ENCODE measurements at regions of chr6 and their contacts with region 1.

Region 1: GRCh38 chr6:40308533-40309306 is 278.4 kb downstream of the LRFN2 start:
- DNase-seq: peak in 1 of 2 donors; percentile 43
- ATAC-seq: no peak
- H3K4me3 ChIP-seq: no peak overlapping the region
- H3K27ac ChIP-seq: no peak overlapping the region
- H3K4me1 ChIP-seq: no peaks in the 10 kb centered on the region
- H3K27me3 ChIP-seq: no peaks in the 10 kb centered on the region

Region 2: GRCh38 chr6:39347906-39348585 is 960.7 kb before region 1 on chr6:
- intact Hi-C with region 1: loop called in 1 of 2 experiments (anchors 10 kb)
- DNase-seq: peak; percentile 79 to 92
- ATAC-seq: peak; percentile 75
- H3K4me3 ChIP-seq: no peak overlapping the region
- H3K27ac ChIP-seq: no peak overlapping the region
- H3K4me1 ChIP-seq: no peaks in the 10 kb centered on the region
- H3K27me3 ChIP-seq: no peaks in the 10 kb centered on the region

Region 3: DNA sequence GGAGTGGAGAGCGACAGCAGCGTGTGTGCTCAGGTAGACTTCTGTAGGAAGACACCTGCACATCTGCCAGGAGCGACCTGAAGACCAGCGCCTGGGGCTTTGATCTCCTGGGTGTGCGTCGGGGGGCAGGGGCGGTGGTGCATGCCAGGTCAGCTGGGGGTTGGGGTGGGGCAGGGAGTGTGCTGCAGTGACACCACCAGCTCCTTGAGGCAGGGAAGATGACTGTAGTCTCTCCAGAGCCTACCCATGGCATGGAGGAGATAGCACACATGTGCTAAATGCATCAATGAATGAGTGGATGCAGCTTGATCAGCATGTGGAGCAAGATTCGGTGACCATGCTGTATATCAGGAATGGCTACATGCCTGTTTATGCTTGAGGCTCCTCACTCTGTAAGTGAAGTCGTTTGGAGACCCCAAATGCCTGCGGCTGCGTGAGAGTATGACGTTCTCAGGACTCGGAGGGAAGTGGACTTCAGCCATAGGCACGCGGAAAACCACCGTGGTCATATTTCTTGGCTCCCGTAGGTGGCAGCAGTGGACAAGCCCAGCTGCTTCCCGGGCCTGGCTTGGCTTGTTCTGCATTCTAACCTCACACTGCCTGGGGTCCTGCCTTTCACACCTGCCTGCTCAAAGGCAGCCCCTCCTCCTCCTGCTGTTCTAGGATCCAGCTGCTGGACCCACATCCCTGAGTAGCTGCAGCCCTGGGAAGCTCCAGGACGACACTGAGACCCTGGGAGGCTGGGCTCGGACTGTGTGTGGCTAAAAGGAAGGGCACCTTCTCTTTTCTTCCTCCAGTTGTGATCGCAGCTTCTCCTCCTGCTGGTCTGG is 946.8 kb before region 1 on chr6:
- intact Hi-C with region 1: loop called in 1 of 2 experiments (anchors 10 kb)
- DNase-seq: peak in 1 of 2 donors; percentile 74
- ATAC-seq: peak; percentile 84
- H3K4me3 ChIP-seq: no peak overlapping the region
- H3K27ac ChIP-seq: no peak overlapping the region
- H3K4me1 ChIP-seq: no peaks in the 10 kb centered on the region
- H3K27me3 ChIP-seq: no peaks in the 10 kb centered on the region

Region 4: GRCh38 chr6:39980839-39981580 is 327.7 kb before region 1 on chr6:
- intact Hi-C with region 1: loop called (anchors 2 to 5 kb)
- DNase-seq: no peak
- ATAC-seq: peak; percentile 89
- H3K4me3 ChIP-seq: no peak overlapping the region
- H3K27ac ChIP-seq: no peak overlapping the region
- H3K4me1 ChIP-seq: no peaks in the 10 kb centered on the region
- H3K27me3 ChIP-seq: no peaks in the 10 kb centered on the region

Region 5: DNA sequence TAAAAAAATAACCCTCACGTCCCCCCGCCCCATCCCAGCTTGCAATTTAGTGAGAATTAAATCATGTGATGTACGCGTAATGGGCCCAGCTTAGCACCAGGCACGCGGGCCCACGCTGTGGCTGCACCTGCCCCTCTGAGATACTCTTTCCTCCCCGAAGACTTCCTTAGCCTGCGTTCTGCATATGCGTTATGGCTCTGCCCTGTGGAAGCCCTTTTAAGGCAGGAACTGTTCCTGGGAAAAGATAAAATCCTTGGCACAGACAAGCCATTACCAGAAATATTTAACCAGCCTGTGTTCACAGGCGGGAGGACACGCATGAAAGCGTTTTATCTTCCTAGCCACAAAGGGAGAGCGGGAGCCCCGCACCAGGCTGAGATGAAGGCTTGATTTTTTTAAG is 32.6 kb before region 1 on chr6:
- intact Hi-C with region 1: no loop called
- DNase-seq: no peak
- ATAC-seq: no peak
- H3K4me3 ChIP-seq: no peak overlapping the region
- H3K27ac ChIP-seq: no peak overlapping the region
- H3K4me1 ChIP-seq: no peaks in the 10 kb centered on the region
- H3K27me3 ChIP-seq: no peaks in the 10 kb centered on the region

Measured in aorta (tissue), 5 donors.